ENCODE measurements at regions of chr17 and their contacts with region 1.

Region 1: DNA sequence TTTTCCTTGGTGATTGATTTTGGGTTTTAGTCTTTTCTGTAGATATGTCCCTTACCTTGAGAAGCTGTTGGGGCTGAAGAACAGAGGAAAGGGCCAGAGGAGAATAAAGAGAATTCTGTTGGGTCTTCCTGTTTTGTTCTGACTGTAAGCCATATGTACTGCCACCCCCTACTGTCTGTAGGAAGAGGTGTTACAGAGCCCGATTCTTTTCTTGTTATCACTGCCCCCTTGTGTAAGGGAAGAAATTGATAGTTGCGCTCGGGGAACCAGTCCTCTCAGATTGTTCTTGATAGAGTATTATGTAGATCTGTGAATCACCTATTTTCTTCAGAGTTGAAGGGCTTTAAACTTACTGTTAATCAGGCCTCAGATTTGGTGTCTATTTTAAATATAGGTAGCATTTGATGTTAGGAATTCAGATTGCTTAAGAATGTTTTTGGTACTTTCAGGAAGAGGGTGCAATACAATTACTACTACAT is 2.4 kb downstream of the TANC2 start:
- DNase-seq: peak; percentile 62
- ATAC-seq: peak; percentile 67
- H3K4me3 Mint-ChIP-seq: no peak overlapping the region
- H3K27ac Mint-ChIP-seq: no peak overlapping the region
- H3K4me1 Mint-ChIP-seq: peaks cover 26% of the 10 kb centered on the region
- H3K27me3 Mint-ChIP-seq: peaks cover 16% of the 10 kb centered on the region

Region 2: DNA sequence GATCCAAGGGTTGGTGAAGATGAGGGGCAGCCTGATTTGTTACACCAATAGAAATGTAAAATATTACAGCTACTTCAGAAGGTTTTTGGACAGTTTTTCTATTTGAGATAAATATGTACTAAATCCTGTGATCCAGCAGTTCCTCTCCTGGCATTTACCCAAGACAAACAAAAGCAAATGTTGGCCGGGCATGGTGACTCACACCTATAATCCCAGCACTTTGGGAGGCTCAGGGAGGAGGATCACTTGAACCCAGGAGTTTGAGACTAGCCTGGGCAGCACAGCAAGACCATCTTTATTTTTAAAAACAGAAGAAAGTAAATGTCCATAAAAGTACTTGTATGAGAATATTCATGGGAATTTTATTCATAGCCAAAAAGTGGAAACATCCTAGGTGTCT is 405.8 kb before region 1 on chr17:
- CTCF ChIA-PET with region 1: no interaction called
- POLR2A ChIA-PET with region 1: no interaction called
- intact Hi-C with region 1: loop called in 1 of 2 experiments (anchors 10 kb)
- DNase-seq: no peak
- ATAC-seq: no peak
- H3K4me3 Mint-ChIP-seq: no peak overlapping the region
- H3K27ac Mint-ChIP-seq: no peak overlapping the region
- H3K4me1 Mint-ChIP-seq: peaks cover 29% of the 10 kb centered on the region
- H3K27me3 Mint-ChIP-seq: no peaks in the 10 kb centered on the region

Region 3: GRCh38 chr17:62671583-62672312 is 296.7 kb before region 1 on chr17:
- CTCF ChIA-PET with region 1: interaction called, 3 read pairs
- POLR2A ChIA-PET with region 1: no interaction called
- intact Hi-C with region 1: loop called in 1 of 2 experiments (anchors 1 kb)
- DNase-seq: no peak
- ATAC-seq: no peak
- H3K4me3 Mint-ChIP-seq: no peak overlapping the region
- H3K27ac Mint-ChIP-seq: no peak overlapping the region
- H3K4me1 Mint-ChIP-seq: no peaks in the 10 kb centered on the region
- H3K27me3 Mint-ChIP-seq: no peaks in the 10 kb centered on the region

Region 4: DNA sequence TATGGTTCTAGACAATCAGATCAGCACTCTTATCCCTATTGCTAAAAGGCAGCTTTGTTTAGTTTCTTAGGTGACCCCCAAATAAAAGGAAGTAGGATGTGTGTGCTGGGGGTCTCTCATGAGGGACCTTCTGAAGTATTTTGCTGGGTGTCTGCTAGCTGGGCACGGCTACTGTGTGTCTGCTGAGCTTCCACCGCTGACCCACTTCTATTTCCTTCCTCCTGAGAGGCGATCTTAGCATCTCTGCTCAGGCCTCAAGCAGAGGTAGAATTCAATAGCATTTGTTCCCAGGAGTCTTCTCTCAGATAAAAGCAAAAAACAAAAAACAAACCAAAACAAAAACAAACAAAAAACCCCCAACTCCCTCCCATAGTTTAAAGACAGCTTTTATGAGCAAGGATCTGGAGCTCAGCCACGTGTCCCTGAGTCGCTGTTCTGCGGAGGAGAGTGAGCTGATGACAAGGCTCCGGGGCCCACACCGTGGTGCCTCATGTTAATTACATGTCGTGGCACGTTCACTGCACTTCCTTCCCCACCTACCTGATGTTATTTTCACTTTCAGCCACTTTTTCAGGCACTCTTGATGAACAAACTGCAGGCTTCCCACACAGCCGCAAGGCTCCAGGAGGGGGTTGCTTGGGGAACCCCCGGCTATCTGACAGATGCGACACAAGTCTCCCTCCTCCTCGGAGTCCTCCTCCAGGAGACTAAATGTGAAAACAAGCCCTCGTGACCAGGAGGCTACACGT is 243.9 kb before region 1 on chr17:
- CTCF ChIA-PET with region 1: interaction called, 5 read pairs
- POLR2A ChIA-PET with region 1: interaction called, 7 read pairs
- intact Hi-C with region 1: loop called (anchors 1 kb)
- DNase-seq: peak; percentile 92
- ATAC-seq: peak; percentile 98
- H3K4me3 Mint-ChIP-seq: peak overlapping the region; percentile 11
- H3K27ac Mint-ChIP-seq: no peak overlapping the region
- H3K4me1 Mint-ChIP-seq: peaks cover 26% of the 10 kb centered on the region
- H3K27me3 Mint-ChIP-seq: peaks cover 51% of the 10 kb centered on the region

Region 5: GRCh38 chr17:62937606-62938005 is 30.9 kb before region 1 on chr17:
- CTCF ChIA-PET with region 1: no interaction called
- POLR2A ChIA-PET with region 1: no interaction called
- intact Hi-C with region 1: no loop called
- DNase-seq: no peak
- ATAC-seq: no peak
- H3K4me3 Mint-ChIP-seq: no peak overlapping the region
- H3K27ac Mint-ChIP-seq: no peak overlapping the region
- H3K4me1 Mint-ChIP-seq: no peaks in the 10 kb centered on the region
- H3K27me3 Mint-ChIP-seq: peaks cover 32% of the 10 kb centered on the region

Region 6: DNA sequence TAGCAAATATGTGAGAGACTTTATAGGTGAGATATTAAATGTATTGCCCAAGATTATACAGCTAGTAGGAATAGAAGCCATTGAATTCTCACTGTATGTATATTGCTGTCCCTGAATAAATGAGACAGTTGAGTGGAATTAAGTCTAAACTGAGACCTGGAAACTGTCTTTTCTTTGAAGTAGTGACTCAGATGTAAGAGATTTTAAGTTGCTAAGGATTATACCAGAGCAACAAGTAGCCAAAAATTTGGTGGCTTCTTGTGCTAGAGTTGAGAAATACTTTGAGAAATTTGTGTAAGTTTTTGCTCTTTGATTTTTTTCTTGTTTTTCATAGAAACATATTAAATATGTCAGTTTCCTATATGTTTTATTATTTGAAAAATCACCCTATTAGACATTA is 56.2 kb after region 1 on chr17:
- CTCF ChIA-PET with region 1: no interaction called
- POLR2A ChIA-PET with region 1: no interaction called
- intact Hi-C with region 1: no loop called
- DNase-seq: no peak
- ATAC-seq: no peak
- H3K4me3 Mint-ChIP-seq: no peak overlapping the region
- H3K27ac Mint-ChIP-seq: no peak overlapping the region
- H3K4me1 Mint-ChIP-seq: peaks cover 4% of the 10 kb centered on the region
- H3K27me3 Mint-ChIP-seq: no peaks in the 10 kb centered on the region

Region 7: GRCh38 chr17:63827002-63827771 is 858.7 kb after region 1 on chr17 and contains the starts of genes FTSJ3 and PSMC5:
- CTCF ChIA-PET with region 1: no interaction called
- POLR2A ChIA-PET with region 1: no interaction called
- intact Hi-C with region 1: loop called in 1 of 2 experiments (anchors 5 kb)
- DNase-seq: peak; percentile 97
- ATAC-seq: peak; percentile 94
- H3K4me3 Mint-ChIP-seq: peak within 1 kb of the TSS; percentile 88
- H3K27ac Mint-ChIP-seq: peak within 1 kb of the TSS; percentile 99
- H3K4me1 Mint-ChIP-seq: peaks cover 72% of the 10 kb centered on the region
- H3K27me3 Mint-ChIP-seq: no peaks in the 10 kb centered on the region
- total RNA-seq, gene FTSJ3: 52.1 to 61.2 TPM
- total RNA-seq, gene PSMC5: 98.2 to 160 TPM